Calu3 (cell line): ENCODE measurements at regions of chr3 and their contacts with region 1.

Region 1: DNA sequence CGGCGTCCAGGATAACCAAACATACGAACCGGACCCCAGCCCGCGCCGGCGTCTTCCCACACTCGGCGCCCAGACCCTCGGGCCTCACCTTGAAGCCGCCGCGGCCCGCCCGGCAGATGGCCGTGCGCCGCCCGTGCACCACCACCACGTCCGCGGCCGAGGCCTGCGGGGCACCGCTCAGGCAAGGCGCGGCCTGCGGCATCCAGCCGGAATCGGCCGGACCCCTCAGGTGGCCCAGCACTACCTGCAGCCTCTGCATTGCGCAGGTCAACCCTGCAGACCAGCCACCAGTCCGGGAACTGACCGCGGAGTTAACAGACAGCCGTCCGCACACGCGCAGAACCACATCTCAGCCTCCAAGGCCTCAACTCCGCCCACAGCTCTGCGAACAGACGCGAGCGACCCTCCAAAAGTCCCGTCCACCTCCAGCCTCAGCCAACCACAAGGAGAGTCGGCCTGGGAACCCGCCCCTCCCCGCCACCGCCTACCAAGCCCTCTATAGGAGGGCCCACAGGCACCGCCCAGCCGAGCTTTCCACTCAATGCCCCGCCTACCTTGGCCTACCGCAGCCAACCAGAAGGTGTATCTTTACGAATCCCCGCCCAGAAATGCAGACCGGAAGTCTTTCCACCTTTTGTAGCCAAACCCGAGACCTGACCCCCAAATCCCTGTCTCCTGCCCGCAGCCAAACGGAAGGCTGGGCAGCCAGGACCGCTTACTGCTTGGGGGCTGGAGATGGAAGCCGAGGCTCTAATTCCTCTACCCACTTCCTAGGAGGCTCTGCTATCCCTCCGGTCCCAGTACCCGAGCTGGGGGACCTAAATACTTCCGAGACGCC is at the start of gene ACAA1:
- DNase-seq: peak; percentile 98
- H3K4me3 Mint-ChIP-seq: peak within 1 kb of the TSS; percentile 85
- H3K27ac Mint-ChIP-seq: peak within 1 kb of the TSS; percentile 92
- H3K4me1 Mint-ChIP-seq: peaks cover 72% of the 10 kb centered on the region
- H3K27me3 Mint-ChIP-seq: no peaks in the 10 kb centered on the region
- CTCF ChIP-seq: no peak
- total RNA-seq, gene ACAA1: 64.5 and 71.1 TPM in 2 replicates

Region 2: GRCh38 chr3:38186781-38187180 is 49.8 kb after region 1 on chr3:
- CTCF ChIA-PET with region 1: interaction called, 10 read pairs
- intact Hi-C with region 1: no loop called
- DNase-seq: no peak
- H3K4me3 Mint-ChIP-seq: no peak overlapping the region
- H3K27ac Mint-ChIP-seq: no peak overlapping the region
- H3K4me1 Mint-ChIP-seq: no peaks in the 10 kb centered on the region
- H3K27me3 Mint-ChIP-seq: no peaks in the 10 kb centered on the region
- CTCF ChIP-seq: no peak

Region 3: GRCh38 chr3:38548159-38548931 is 411.3 kb after region 1 on chr3:
- CTCF ChIA-PET with region 1: no interaction called
- intact Hi-C with region 1: no loop called
- DNase-seq: peak; percentile 18
- H3K4me3 Mint-ChIP-seq: no peak overlapping the region
- H3K27ac Mint-ChIP-seq: no peak overlapping the region
- H3K4me1 Mint-ChIP-seq: no peaks in the 10 kb centered on the region
- H3K27me3 Mint-ChIP-seq: peaks cover 58% of the 10 kb centered on the region
- CTCF ChIP-seq: no peak